ENCODE measurements at regions of chr2 and their contacts with region 1.

Region 1: DNA sequence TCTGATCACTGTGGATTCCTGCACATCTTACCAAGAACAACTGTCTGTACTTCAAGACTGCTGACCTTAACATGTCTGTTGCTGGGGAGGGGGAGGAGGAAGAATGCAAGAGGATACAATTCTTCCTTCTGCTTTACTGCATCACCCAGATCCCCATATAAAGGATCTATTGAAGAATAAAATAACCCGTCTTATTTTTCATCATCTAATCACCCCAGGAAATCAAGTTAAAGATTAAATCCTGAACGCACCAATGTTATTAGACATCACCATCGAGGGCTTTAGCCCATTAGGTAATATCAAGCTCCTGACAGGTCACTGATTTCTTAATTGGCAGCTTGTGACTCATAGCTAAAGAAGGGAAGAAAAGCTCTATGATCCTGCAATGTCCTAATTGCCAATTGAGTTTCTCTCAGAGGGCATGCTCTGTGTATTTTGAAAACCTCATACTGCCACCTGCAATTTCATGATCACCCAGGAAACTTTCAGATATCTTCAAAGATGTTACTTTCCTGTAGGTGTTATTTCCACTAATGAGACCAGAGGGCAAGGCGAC is 75.4 kb upstream of the KCNE4 start:
- DNase-seq: no peak
- H3K4me3 ChIP-seq: no peak overlapping the region
- H3K27ac ChIP-seq: no peak overlapping the region
- H3K4me1 ChIP-seq: no peaks in the 10 kb centered on the region
- H3K27me3 ChIP-seq: no peaks in the 10 kb centered on the region
- CTCF ChIP-seq: no peak

Region 2: DNA sequence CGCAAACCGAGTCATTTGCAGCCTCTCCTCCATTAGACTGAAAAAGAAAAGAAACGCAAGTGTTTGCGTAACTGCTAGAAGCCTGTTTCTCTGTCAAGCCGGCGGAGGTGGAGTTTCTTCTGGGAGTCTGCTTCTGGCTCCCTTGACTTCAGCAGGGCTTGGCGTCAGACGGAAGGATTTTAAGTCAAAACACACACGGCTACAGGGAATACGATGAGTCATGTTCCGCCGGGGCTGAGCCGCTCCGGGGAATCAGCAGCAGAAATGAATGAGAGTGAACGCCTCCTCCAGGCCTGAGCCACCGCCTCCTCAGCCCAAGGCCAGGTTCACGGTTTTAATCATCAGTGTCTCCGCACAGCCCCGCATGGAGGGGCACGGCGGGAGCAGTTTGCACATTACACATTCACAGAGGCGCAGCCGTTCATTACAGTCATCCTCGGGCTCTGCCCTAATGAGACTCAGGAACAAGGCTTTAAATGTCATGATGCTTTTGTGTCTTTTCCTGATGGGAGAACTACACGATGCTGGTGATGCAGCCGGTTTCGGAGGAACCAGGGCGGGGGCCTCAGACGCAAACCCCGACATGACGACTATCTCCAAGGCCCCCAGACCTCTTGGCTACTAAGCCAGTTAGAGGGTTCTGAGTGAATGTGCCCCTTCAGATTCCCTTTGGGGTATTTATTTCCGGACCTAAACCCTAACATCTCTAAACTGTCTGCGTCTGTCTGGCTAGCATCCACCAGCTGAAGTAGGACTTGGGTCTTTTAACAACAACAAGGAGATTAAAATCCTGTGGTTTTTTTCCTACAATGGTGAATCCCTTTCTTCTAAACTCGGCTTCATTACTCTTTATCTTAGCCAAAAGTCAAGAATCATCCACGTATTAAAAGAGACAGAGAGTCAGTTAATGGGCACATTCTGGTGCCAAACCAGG is 636.7 kb after region 1 on chr2:
- intact Hi-C with region 1: loop called (anchors 10 kb)
- DNase-seq: peak; percentile 59 to 94
- H3K4me3 ChIP-seq: peak overlapping the region; percentile 37 to 43
- H3K27ac ChIP-seq: peak overlapping the region; percentile 71 to 77
- H3K4me1 ChIP-seq: peaks cover 0 to 9% of the 10 kb centered on the region in 2 donors
- H3K27me3 ChIP-seq: no peaks in the 10 kb centered on the region
- CTCF ChIP-seq: peak in 2 of 3 experiments; percentile 7 to 15